OCI-LY7 (cell line): ENCODE measurements at regions of chr9 and their contacts with region 1.

Region 1: DNA sequence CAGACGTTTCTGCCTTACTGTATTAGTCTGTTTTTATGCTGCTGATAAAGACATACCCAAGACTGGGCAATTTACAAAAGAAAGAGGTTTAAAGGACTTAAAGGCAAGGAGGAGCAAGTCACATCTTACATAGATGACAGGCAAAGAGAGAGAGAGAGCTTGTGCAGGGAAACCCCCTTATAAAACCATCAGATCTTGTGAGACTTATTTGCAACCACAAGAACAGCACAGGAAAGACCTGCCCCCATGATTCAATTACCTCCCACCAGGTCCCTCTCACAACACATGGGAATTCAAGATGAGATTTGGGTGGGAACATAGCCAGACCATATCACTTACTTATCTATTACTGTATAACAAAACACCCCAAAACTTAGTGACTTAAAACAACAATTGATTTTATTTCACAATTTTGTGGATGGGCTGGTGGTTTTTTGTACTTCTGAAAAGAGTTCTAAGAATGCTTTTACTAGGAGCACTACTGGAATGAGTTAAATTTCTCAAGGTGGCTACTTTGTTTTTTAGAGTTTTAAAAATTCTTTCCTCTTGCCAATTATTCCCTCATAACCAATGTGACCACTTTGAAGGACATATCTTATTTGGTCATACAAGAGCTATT is 10.3 kb downstream of the RUSC2 start:
- DNase-seq: no peak
- H3K4me3 ChIP-seq: no peak overlapping the region
- H3K27ac ChIP-seq: no peak overlapping the region
- H3K4me1 ChIP-seq: no peaks in the 10 kb centered on the region
- CTCF ChIP-seq: no peak

Region 2: GRCh38 chr9:35464141-35465025 is 35.9 kb before region 1 on chr9:
- CTCF ChIA-PET with region 1: no interaction called
- POLR2A ChIA-PET with region 1: no interaction called
- intact Hi-C with region 1: loop called (anchors 5 kb)
- DNase-seq: no peak
- H3K4me3 ChIP-seq: no peak overlapping the region
- H3K27ac ChIP-seq: no peak overlapping the region
- H3K4me1 ChIP-seq: no peaks in the 10 kb centered on the region
- CTCF ChIP-seq: no peak